Posterior vena cava (tissue), 2 donors: ENCODE measurements at regions of chr7 and their contacts with region 1.

Region 1: DNA sequence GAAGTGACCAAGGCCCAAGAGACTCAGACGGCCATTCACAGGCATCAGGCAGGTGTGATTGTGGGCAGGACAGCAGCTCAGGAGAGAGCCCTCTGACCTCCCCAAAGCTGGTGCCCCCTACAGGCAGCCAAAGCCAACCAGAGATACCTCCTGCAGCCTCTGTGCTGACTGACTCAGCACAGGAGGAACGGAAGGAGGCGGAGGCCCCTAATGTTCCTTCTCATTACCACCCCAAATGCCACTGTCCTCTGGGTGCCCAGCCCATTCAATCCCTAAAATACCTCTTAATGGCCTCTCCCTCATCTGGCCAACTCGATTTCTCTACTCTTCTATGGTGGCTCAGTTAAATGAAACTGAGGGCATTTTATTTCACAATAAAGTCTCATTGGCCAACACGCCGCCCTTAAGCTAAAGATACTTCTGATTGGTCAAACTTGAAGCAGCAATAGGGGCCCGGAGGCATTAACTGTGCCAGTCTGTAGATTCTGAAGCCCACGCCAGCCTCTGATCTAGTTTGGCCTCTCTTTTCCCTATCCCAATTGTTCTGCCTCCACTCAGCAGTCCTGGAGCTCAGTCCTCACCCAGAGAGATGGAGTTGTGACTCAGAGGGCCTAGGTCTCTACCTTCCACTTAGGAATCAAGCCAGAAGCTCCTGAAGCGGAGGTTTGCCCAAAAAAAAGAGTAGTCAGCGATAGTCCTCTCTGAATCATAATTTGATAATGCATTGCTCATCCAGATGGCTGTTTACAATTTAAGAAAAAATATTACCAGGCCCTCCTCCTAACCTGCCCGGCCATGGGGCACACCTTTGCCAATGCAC is 1.2 kb downstream of the CYREN start:
- DNase-seq: no peak

Region 2: DNA sequence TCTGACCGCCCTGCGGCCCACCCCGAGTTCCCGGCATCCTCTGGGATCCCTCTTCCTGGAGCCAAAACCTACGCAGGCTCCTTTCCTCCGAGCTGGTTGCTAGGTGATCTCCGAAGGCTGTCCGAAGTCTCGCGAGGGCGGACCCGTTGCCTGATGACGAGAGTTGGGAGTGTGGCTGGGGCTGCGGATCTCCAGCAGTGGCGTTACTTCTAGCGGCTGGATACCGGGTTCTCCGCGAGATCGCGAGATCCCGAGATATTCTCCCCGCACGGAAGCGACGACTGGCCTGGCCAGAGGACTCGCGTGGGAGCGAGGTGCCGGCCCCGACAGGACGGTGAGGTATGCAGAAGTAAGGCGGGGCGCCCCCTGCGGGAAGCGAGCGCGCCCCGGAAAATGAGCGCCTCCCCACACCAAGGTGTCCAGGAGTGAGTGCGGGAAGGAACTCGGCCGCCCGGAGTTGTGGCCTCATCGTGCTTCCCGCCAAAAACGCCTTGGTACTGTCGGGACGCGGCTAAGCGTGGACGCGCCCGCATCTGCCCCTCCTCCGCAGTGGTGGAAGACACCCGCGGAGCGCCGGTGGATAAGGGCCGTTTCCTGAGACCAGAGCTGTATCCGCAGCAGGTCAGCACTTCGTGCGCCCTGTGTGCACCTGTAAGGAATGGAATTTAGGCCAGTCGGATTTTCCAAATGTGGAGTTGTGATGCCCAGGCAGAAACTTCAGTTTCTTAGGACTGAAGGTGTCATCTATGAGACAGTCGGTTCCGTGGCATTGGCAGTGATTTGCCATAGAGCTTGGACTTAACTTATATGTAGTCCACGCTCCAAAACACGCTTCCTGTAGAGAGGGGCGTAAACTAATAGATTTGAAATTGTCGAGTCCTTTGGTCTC is 182.7 kb before region 1 on chr7 and contains the start of gene AGBL3:
- intact Hi-C with region 1: loop called (anchors 5 to 10 kb)
- DNase-seq: peak; percentile 99
- total RNA-seq, gene AGBL3: 4.3 to 5.6 TPM

Region 3: DNA sequence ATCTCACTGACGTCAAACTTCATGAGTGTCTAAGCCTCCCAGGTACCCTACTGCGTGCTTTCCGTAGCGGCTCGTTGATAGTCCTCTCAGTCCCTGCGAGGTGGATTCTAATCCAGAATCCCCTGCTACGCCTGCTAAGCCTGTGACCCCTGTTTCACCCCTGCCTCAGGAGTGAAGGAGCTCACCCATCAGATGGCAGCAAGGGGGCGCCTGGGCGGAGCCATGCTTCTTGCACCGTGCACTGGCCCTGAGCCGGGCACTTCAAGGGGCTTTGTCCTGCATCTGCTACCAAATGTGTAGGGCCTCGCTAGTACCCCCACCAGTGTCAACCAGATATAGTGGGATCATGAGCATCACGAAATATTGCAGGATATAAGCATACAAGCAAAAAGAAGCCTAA is 63.4 kb after region 1 on chr7:
- intact Hi-C with region 1: no loop called
- DNase-seq: no peak

Region 4: GRCh38 chr7:135300913-135301765 is 131.8 kb after region 1 on chr7:
- intact Hi-C with region 1: no loop called
- DNase-seq: no peak